AG04449 (cell line): ENCODE measurements at regions of chr5 and their contacts with region 1.

Region 1: GRCh38 chr5:77076961-77077823 is 9.9 kb downstream of the ZBED3 start:
- DNase-seq: no peak
- H3K4me3 ChIP-seq: peak overlapping the region; percentile 56
- CTCF ChIP-seq: peak; percentile 72

Region 2: GRCh38 chr5:76867827-76868693 is 209.1 kb before region 1 on chr5:
- CTCF ChIA-PET with region 1: interaction called, 57 read pairs
- POLR2A ChIA-PET with region 1: no interaction called
- DNase-seq: peak; percentile 16
- H3K4me3 ChIP-seq: no peak overlapping the region
- CTCF ChIP-seq: peak; percentile 63

Region 3: GRCh38 chr5:77030097-77031071 is 46.8 kb before region 1 on chr5 and contains the start of gene AGGF1:
- CTCF ChIA-PET with region 1: interaction called, 16 read pairs
- POLR2A ChIA-PET with region 1: no interaction called
- DNase-seq: peak; percentile 57
- H3K4me3 ChIP-seq: peak within 1 kb of the TSS; percentile 90
- CTCF ChIP-seq: no peak

Region 4: DNA sequence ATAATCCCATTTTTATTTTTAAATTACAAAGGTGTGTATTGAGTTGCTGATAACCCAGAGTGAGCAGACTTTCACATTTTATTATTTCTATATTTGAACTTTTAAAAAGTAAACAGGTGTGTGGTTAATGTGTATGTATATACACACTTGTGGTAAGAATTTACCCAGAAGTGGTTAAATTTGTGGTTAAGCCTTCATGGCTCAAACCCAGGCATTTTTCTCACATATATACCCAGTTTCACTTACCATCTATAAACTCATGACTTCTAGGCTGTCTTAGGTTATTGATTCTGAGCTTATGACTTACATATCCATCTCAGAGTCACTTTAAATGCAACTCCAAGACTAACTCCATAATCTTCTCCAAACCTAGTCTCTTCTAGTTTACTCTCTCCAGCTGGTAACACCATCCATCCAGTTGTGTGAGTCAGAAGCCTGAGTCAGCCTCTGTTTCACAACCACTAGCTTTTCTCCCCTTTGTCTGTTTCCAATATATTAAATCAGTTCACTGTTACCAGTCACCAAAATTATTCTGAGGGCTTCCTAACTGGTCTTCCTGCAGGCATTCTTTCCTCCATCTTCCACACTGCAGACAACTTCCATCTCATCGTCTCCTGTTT is 10.3 kb before region 1 on chr5:
- CTCF ChIA-PET with region 1: interaction called, 49 read pairs
- POLR2A ChIA-PET with region 1: no interaction called
- DNase-seq: no peak
- H3K4me3 ChIP-seq: no peak overlapping the region
- CTCF ChIP-seq: no peak